ENCODE measurements at regions of chr6 and their contacts with region 1.

Region 1: GRCh38 chr6:97282726-97283617 is at the start of gene MMS22L:
- DNase-seq: peak; percentile 85 to 98
- ATAC-seq: peak; percentile 97 to 98 (median 97)
- H3K4me3 ChIP-seq: peak within 1 kb of the TSS; percentile 92
- H3K4me3 Mint-ChIP-seq: peak within 1 kb of the TSS; percentile 95
- H3K27ac ChIP-seq: peak within 1 kb of the TSS; percentile 23
- H3K27ac Mint-ChIP-seq: peak within 1 kb of the TSS; percentile 72 to 84
- H3K4me1 ChIP-seq: peaks cover 2% of the 10 kb centered on the region
- H3K4me1 Mint-ChIP-seq: peaks cover 17 to 20% of the 10 kb centered on the region in 2 donors
- H3K27me3 ChIP-seq: no peaks in the 10 kb centered on the region
- H3K27me3 Mint-ChIP-seq: peaks cover 0 to 6% of the 10 kb centered on the region in 2 donors
- CTCF ChIP-seq: no peak
- total RNA-seq, gene MMS22L: 9.1 to 14.3 (median 11.7) TPM

Region 2: GRCh38 chr6:95577304-95578105 is 1705.5 kb before region 1 on chr6 and contains the start of gene MANEA:
- intact Hi-C with region 1: loop called (anchors 5 kb)
- DNase-seq: peak; percentile 79 to 89
- ATAC-seq: peak; percentile 83 to 94 (median 87)
- H3K4me3 ChIP-seq: peak within 1 kb of the TSS; percentile 76
- H3K4me3 Mint-ChIP-seq: peak within 1 kb of the TSS; percentile 97
- H3K27ac ChIP-seq: peak within 1 kb of the TSS; percentile 93
- H3K27ac Mint-ChIP-seq: peak within 1 kb of the TSS; percentile 97 to 99
- H3K4me1 ChIP-seq: peaks cover 4% of the 10 kb centered on the region
- H3K4me1 Mint-ChIP-seq: peaks cover 35% of the 10 kb centered on the region in 2 donors
- H3K27me3 ChIP-seq: no peaks in the 10 kb centered on the region
- H3K27me3 Mint-ChIP-seq: no peaks in the 10 kb centered on the region
- CTCF ChIP-seq: no peak
- total RNA-seq, gene MANEA: 4.7 to 10.6 (median 5.7) TPM

Region 3: DNA sequence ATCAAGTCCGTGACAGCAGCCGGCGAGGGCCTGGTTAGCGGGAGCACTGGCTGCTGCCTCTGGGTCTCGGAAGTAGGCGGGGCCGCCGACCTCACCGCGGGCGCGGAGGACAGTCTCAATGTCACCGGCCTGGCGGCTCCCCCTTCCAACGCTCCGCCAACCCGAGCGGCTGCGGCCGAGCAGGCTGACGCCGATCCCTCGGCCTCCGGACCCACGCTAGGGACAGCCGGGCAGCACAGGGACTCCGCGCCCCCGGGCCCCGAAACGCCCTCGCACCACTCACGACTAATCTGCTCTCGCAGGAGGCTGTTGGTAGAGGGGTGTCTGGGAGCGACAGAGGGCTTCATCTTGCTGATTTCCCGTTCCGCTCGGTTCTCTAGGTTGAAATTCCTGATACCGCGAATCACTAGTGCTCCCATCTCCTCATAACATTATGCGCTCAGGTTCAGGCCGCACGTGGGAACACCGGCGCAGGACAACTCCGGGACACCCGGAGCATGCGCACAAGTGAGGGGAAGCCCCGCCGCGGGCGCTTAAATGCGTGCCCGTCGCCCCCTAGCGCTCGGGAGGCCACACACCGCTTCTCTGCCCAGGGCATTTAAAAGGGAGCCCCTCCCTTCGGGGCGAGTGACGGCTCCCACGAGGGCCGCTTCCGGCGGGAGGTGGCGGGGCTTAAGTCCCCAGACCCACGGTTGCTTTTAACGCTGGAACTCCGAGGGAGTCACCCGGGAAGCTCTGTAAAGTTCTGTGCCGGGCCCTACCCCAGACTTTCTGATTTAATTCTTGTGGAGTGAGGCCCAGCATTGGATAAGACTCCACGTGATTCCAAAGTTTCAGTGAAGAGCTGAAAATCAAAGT is 385.4 kb before region 1 on chr6 and contains the start of gene NDUFAF4:
- intact Hi-C with region 1: loop called (anchors 2 kb)
- DNase-seq: peak; percentile 92 to 97
- ATAC-seq: peak; percentile 92 to 98 (median 94)
- H3K4me3 ChIP-seq: peak within 1 kb of the TSS; percentile 85
- H3K4me3 Mint-ChIP-seq: peak within 1 kb of the TSS; percentile 92
- H3K27ac ChIP-seq: peak within 1 kb of the TSS; percentile 90
- H3K27ac Mint-ChIP-seq: peak within 1 kb of the TSS; percentile 85 to 91
- H3K4me1 ChIP-seq: peaks cover 5% of the 10 kb centered on the region
- H3K4me1 Mint-ChIP-seq: peaks cover 18 to 19% of the 10 kb centered on the region in 2 donors
- H3K27me3 ChIP-seq: no peaks in the 10 kb centered on the region
- H3K27me3 Mint-ChIP-seq: peaks cover 10 to 13% of the 10 kb centered on the region in 2 donors
- CTCF ChIP-seq: peak; percentile 86
- total RNA-seq, gene NDUFAF4: 23.8 to 30.9 (median 29.8) TPM

Region 4: DNA sequence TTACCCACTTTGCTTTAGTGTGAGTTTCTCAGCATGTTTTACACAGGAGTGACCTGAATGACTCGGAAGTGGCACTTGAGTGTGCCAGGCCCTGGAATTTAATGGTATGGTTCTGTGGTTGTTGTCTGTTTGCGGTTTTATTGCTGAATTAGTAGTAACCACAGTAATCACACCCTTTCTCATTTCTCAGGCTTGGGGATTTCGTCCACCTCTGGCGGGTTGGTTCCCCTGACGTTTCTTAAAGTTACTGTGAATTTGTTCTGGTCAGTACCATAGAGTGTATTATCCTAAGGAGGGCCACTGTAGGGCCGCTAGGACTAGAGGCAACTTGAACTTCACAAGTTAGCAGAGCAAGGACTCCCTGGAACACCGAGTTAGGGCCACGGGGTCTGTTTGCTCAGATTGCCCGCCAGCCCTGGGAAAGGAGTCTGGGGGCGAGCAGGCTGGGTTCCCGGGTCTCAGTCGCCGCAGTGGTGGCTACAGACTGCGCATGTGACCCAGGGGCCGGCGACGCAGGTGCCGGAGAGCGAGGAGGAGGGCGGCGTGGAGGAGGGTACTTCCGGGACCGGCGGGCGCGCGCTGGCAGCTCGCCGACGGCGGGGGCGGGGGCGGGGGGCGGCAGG is 359.0 kb before region 1 on chr6:
- intact Hi-C with region 1: loop called (anchors 10 kb)
- DNase-seq: peak in 1 of 2 donors; percentile 74
- ATAC-seq: peak; percentile 33 to 55 (median 52)
- H3K4me3 ChIP-seq: peak overlapping the region; percentile 65
- H3K4me3 Mint-ChIP-seq: peak overlapping the region; percentile 94
- H3K27ac ChIP-seq: peak overlapping the region; percentile 98
- H3K27ac Mint-ChIP-seq: peak overlapping the region; percentile 94 to 96
- H3K4me1 ChIP-seq: peaks cover 14% of the 10 kb centered on the region
- H3K4me1 Mint-ChIP-seq: peaks cover 23 to 32% of the 10 kb centered on the region in 2 donors
- H3K27me3 ChIP-seq: no peaks in the 10 kb centered on the region
- H3K27me3 Mint-ChIP-seq: peaks cover 10 to 29% of the 10 kb centered on the region in 2 donors
- CTCF ChIP-seq: no peak

Region 5: DNA sequence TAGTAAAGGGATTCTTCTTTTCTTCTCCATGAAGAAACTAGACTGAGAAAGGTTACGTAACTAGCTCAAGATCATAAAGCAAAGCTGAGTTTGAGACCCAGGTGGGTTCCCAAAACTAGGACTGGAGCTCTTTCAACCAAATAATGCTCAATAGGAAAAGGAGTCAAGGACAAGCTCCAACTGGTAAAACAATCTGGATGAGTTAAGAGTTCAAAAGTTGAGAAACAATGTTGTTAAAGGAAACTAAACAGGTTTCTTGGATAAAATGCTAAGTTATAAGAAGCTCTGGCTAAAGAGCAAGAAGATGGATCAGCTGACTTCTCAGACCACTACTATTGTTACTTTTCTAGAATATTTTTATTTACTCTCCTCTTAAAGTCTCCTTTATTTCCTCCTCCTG is 137.3 kb before region 1 on chr6:
- intact Hi-C with region 1: no loop called
- DNase-seq: no peak
- ATAC-seq: no peak
- H3K4me3 ChIP-seq: no peak overlapping the region
- H3K4me3 Mint-ChIP-seq: no peak overlapping the region
- H3K27ac ChIP-seq: no peak overlapping the region
- H3K27ac Mint-ChIP-seq: no peak overlapping the region
- H3K4me1 ChIP-seq: no peaks in the 10 kb centered on the region
- H3K4me1 Mint-ChIP-seq: peaks cover 0 to 4% of the 10 kb centered on the region in 2 donors
- H3K27me3 ChIP-seq: no peaks in the 10 kb centered on the region
- H3K27me3 Mint-ChIP-seq: no peaks in the 10 kb centered on the region
- CTCF ChIP-seq: no peak

Measured in natural killer cell (primary cell).